GM12878 (cell line): ENCODE measurements at regions of chr6 and their contacts with region 1.

Region 1: GRCh38 chr6:42367353-42368011 is 84.2 kb downstream of the TRERF1 start:
- DNase-seq: peak; percentile 59
- ATAC-seq: peak; percentile 92
- H3K4me3 ChIP-seq: peak overlapping the region; percentile 35; the same call in 1 of the 2 replicates
- H3K27ac ChIP-seq: peak overlapping the region; percentile 82
- H3K4me1 ChIP-seq: peaks cover 58% of the 10 kb centered on the region
- H3K27me3 ChIP-seq: no peaks in the 10 kb centered on the region
- CTCF ChIP-seq: no peak
- EP300 ChIP-seq: no peak
- POLR2A ChIP-seq: peak; percentile 52
- RAD21 ChIP-seq: no peak

Region 2: GRCh38 chr6:42315991-42316378 is 51.5 kb before region 1 on chr6:
- CTCF ChIA-PET with region 1: no interaction called
- POLR2A ChIA-PET with region 1: interaction called, 6 read pairs
- RAD21 ChIA-PET with region 1: interaction called, 11 read pairs
- SMC1A ChIA-PET with region 1: interaction called, 5 read pairs
- in situ Hi-C with region 1: no loop called
- intact Hi-C with region 1: no loop called
- DNase-seq: no peak
- ATAC-seq: peak; percentile 78
- H3K4me3 ChIP-seq: no peak overlapping the region
- H3K27ac ChIP-seq: no peak overlapping the region
- H3K4me1 ChIP-seq: peaks cover 14% of the 10 kb centered on the region
- H3K27me3 ChIP-seq: no peaks in the 10 kb centered on the region
- CTCF ChIP-seq: no peak
- EP300 ChIP-seq: no peak
- POLR2A ChIP-seq: no peak
- RAD21 ChIP-seq: no peak

Region 3: DNA sequence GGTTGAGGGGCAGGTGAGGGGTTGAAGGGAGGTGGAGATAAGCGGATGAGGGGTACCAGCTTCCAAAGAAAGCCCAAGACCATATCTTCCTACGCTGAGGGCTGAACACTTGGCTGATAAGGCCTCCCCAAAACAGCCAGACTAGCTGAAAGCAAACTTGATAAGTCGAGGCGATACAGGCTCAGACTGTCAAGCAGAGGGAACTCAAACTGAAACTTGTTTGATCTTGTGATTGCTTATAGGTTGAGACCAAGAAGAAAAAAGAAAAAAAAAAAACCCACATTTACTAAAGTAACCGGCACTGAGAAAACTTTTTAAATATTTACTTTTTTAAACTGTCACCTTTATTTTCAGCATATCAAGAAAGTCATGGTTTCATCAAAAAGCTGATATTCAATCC is 10.6 kb after region 1 on chr6:
- CTCF ChIA-PET with region 1: interaction called, 5 read pairs
- POLR2A ChIA-PET with region 1: interaction called, 7 read pairs
- RAD21 ChIA-PET with region 1: interaction called, 24 read pairs
- SMC1A ChIA-PET with region 1: interaction called, 13 read pairs
- in situ Hi-C with region 1: no loop called
- intact Hi-C with region 1: no loop called
- DNase-seq: no peak
- ATAC-seq: peak; percentile 78
- H3K4me3 ChIP-seq: no peak overlapping the region
- H3K27ac ChIP-seq: peak overlapping the region; percentile 56
- H3K4me1 ChIP-seq: peaks cover 37% of the 10 kb centered on the region
- H3K27me3 ChIP-seq: no peaks in the 10 kb centered on the region
- CTCF ChIP-seq: no peak
- EP300 ChIP-seq: no peak
- POLR2A ChIP-seq: no peak
- RAD21 ChIP-seq: no peak

Region 4: GRCh38 chr6:42402184-42402583 is 34.7 kb after region 1 on chr6:
- CTCF ChIA-PET with region 1: no interaction called
- POLR2A ChIA-PET with region 1: no interaction called
- RAD21 ChIA-PET with region 1: interaction called, 7 read pairs
- SMC1A ChIA-PET with region 1: interaction called, 14 read pairs
- in situ Hi-C with region 1: no loop called
- intact Hi-C with region 1: no loop called
- DNase-seq: peak; percentile 74
- ATAC-seq: peak; percentile 99
- H3K4me3 ChIP-seq: no peak overlapping the region
- H3K27ac ChIP-seq: no peak overlapping the region
- H3K4me1 ChIP-seq: peaks cover 12% of the 10 kb centered on the region
- H3K27me3 ChIP-seq: no peaks in the 10 kb centered on the region
- CTCF ChIP-seq: no peak
- EP300 ChIP-seq: peak; percentile 91 to 93
- POLR2A ChIP-seq: no peak
- RAD21 ChIP-seq: peak; percentile 28; the same call in 1 of the 2 replicates

Region 5: GRCh38 chr6:42423244-42423643 is 55.8 kb after region 1 on chr6:
- CTCF ChIA-PET with region 1: no interaction called
- POLR2A ChIA-PET with region 1: no interaction called
- RAD21 ChIA-PET with region 1: interaction called, 12 read pairs
- SMC1A ChIA-PET with region 1: interaction called, 6 read pairs
- in situ Hi-C with region 1: no loop called
- intact Hi-C with region 1: no loop called
- DNase-seq: peak; percentile 61
- ATAC-seq: peak; percentile 78
- H3K4me3 ChIP-seq: no peak overlapping the region
- H3K27ac ChIP-seq: no peak overlapping the region
- H3K4me1 ChIP-seq: peaks cover 52% of the 10 kb centered on the region
- H3K27me3 ChIP-seq: no peaks in the 10 kb centered on the region
- CTCF ChIP-seq: no peak
- EP300 ChIP-seq: peak; percentile 31 to 34; a peak in 1 of 4 replicates
- POLR2A ChIP-seq: no peak
- RAD21 ChIP-seq: no peak